ENCODE measurements at regions of chr16 and their contacts with region 1.

Region 1: DNA sequence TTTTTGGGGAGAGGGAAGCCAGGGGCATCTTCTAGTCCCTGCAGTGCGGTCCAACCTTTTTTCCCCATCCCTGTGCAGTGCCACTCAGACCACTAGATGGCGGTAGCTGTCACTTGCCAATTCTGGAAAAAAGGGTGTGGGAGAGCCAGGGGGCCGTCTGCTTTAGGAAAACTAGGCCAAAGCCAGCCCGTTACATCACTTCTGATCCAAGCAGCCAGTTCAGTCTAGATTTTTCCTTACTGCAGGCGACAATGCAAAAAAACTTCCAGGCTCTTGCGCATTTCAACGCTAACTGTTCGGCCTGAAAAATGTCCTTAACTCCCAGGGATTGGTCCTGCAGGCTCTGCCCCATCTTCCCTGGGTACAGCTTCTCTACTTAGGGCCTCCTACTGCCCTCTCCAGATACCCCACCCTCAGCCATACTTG is 69.2 kb upstream of the CES5A start:
- DNase-seq: peak; percentile 52
- H3K27ac ChIP-seq: no peak overlapping the region
- CTCF ChIP-seq: peak; percentile 96

Region 2: GRCh38 chr16:56317998-56318826 is 373.8 kb after region 1 on chr16:
- CTCF ChIA-PET with region 1: interaction called, 28 read pairs
- POLR2A ChIA-PET with region 1: no interaction called
- DNase-seq: peak; percentile 92
- H3K27ac ChIP-seq: no peak overlapping the region
- CTCF ChIP-seq: peak; percentile 81

Measured in RWPE1 (cell line).